Endothelial cell of umbilical vein (primary cell): ENCODE measurements at regions of chr2 and their contacts with region 1.

Region 1: DNA sequence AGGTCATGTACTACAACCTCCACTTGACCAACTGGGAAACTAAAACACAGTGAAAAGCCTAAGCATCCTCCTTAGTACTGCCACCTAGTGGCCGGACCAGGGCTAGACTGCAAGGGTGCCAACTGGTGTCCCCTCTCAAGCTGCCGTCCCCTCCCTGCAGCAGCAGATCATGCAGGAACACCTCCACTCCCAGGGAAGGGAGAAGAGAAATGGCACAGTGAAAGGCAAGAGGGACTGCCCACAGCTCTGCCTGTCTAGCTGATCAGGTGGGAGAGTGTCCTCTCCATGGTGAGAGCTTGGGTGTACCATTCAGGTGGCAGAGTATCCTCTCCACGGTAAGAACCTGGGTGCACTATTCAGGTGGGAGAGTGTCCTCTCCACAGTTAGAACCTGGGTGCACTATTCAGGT is 78.1 kb downstream of the AAK1 start:
- DNase-seq: peak; percentile 47
- H3K4me3 ChIP-seq: no peak overlapping the region
- H3K27ac ChIP-seq: no peak overlapping the region
- H3K4me1 ChIP-seq: peaks cover 5% of the 10 kb centered on the region
- H3K27me3 ChIP-seq: no peaks in the 10 kb centered on the region
- CTCF ChIP-seq: peak; percentile 82 to 86
- POLR2A ChIP-seq: no peak

Region 2: DNA sequence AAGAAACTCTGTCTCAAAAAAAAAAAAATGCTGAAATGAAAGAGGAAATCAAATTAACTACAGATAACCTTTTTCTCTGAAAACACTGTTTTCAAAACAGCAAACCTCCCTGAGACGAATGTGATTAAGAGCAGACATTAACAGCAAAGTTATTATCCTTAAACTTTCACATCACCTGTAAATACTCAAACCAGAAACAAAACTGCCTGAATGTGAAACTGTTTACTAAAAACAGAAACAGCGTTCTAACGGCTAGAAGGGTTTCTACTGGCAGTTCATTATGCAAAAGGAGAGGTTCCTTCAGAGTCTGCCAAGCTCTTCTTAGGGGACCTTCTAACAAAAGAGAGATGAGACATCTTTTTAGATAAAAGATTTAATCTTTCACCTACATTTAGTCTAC is 1361.8 kb before region 1 on chr2:
- CTCF ChIA-PET with region 1: no interaction called
- POLR2A ChIA-PET with region 1: no interaction called
- dilution Hi-C with region 1: no loop called
- intact Hi-C with region 1: no loop called
- DNase-seq: no peak
- H3K4me3 ChIP-seq: no peak overlapping the region
- H3K27ac ChIP-seq: no peak overlapping the region
- H3K4me1 ChIP-seq: no peaks in the 10 kb centered on the region
- H3K27me3 ChIP-seq: no peaks in the 10 kb centered on the region
- CTCF ChIP-seq: no peak
- POLR2A ChIP-seq: no peak

Region 3: DNA sequence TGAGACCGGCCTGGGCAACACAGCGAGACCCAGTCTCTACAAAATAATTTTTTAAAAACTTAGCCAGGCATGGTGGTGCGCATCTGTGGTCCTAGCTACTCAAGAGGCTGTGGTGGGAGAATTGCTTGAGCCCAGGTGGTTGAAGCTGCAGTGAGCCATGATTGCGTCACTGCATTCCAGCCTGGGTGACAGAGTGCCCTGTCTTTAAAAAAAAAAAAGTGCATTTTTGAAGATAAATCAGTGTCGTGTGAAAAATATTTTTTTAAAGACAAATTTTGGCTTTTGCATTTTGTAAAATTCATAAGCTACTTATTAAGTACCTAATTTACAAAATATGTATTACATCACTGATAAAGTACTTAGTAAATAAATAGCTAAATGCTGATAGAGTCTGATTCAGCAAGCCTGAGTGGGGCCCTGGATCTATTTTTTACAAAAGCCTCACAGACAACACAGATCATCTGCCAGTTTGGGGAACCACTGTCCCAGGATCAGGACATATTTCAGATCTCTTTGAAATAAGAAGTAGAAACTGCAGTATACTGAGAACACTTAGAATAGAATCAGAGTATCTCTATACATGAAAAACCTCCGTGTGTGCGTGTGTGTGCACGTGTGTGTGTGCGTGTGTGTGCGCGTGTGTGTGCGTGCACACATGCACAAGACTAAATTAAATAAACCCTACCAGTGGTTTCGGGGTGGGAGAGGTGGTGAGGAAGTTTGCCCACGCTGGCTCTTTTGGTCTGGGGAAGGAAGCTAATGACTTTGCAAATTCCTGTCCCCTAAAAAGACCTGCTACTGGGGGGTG is 16.5 kb after region 1 on chr2:
- CTCF ChIA-PET with region 1: interaction called, 35 read pairs
- POLR2A ChIA-PET with region 1: no interaction called
- dilution Hi-C with region 1: no loop called
- intact Hi-C with region 1: no loop called
- DNase-seq: no peak
- H3K4me3 ChIP-seq: no peak overlapping the region
- H3K27ac ChIP-seq: no peak overlapping the region
- H3K4me1 ChIP-seq: peaks cover 6% of the 10 kb centered on the region
- H3K27me3 ChIP-seq: no peaks in the 10 kb centered on the region
- CTCF ChIP-seq: no peak
- POLR2A ChIP-seq: no peak

Region 4: GRCh38 chr2:69594341-69594740 is 28.9 kb after region 1 on chr2:
- CTCF ChIA-PET with region 1: interaction called, 11 read pairs
- POLR2A ChIA-PET with region 1: no interaction called
- dilution Hi-C with region 1: no loop called
- intact Hi-C with region 1: no loop called
- DNase-seq: no peak
- H3K4me3 ChIP-seq: no peak overlapping the region
- H3K27ac ChIP-seq: no peak overlapping the region
- H3K4me1 ChIP-seq: no peaks in the 10 kb centered on the region
- H3K27me3 ChIP-seq: no peaks in the 10 kb centered on the region
- CTCF ChIP-seq: no peak
- POLR2A ChIP-seq: no peak

Region 5: DNA sequence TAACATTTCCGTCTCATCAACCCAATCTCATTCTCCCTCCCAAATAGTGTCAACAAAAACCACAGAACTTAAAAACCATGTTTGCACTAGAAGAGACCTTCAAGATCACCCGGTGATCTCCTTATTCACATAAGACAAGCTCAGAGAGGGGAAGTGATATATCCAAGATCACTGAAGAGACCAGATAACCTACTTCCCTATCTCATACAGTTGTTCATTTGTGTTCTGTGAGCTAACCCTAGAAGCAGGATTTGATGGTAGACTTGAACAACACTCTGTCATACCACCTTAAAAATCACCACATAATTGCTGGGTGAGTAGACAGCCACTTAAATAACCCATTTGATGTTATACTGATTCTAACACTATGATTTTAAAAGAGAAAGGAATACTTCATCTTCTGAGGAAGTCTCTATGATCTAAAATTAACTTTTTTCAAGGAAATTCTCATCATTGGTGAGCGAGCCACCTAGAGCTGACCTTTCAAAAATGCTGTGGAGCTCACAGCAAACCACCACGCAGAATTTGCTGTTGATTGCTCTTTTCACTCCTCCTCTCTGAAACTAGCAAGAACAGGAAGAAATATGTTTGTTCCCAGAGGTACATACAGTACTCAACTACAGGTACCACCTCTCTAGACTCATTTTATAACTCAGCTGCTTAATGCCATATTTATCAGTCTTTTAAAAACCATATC is 63.0 kb after region 1 on chr2:
- CTCF ChIA-PET with region 1: interaction called, 12 read pairs
- POLR2A ChIA-PET with region 1: no interaction called
- dilution Hi-C with region 1: no loop called
- intact Hi-C with region 1: no loop called
- DNase-seq: no peak
- H3K4me3 ChIP-seq: no peak overlapping the region
- H3K27ac ChIP-seq: no peak overlapping the region
- H3K4me1 ChIP-seq: peaks cover 2% of the 10 kb centered on the region
- H3K27me3 ChIP-seq: no peaks in the 10 kb centered on the region
- CTCF ChIP-seq: no peak
- POLR2A ChIP-seq: no peak

Region 6: GRCh38 chr2:69704446-69704845 is 139.0 kb after region 1 on chr2:
- CTCF ChIA-PET with region 1: interaction called, 10 read pairs
- POLR2A ChIA-PET with region 1: no interaction called
- dilution Hi-C with region 1: no loop called
- intact Hi-C with region 1: no loop called
- DNase-seq: no peak
- H3K4me3 ChIP-seq: no peak overlapping the region
- H3K27ac ChIP-seq: no peak overlapping the region
- H3K4me1 ChIP-seq: no peaks in the 10 kb centered on the region
- H3K27me3 ChIP-seq: no peaks in the 10 kb centered on the region
- CTCF ChIP-seq: no peak
- POLR2A ChIP-seq: no peak

Region 7: GRCh38 chr2:69715964-69716363 is 150.5 kb after region 1 on chr2:
- CTCF ChIA-PET with region 1: interaction called, 26 read pairs
- POLR2A ChIA-PET with region 1: interaction called, 14 read pairs
- dilution Hi-C with region 1: no loop called
- intact Hi-C with region 1: loop called (anchors 1 kb)
- DNase-seq: no peak
- H3K4me3 ChIP-seq: no peak overlapping the region
- H3K27ac ChIP-seq: no peak overlapping the region
- H3K4me1 ChIP-seq: no peaks in the 10 kb centered on the region
- H3K27me3 ChIP-seq: no peaks in the 10 kb centered on the region
- CTCF ChIP-seq: no peak
- POLR2A ChIP-seq: no peak

Region 8: GRCh38 chr2:70094978-70095719 is 529.7 kb after region 1 on chr2:
- CTCF ChIA-PET with region 1: no interaction called
- POLR2A ChIA-PET with region 1: no interaction called
- dilution Hi-C with region 1: no loop called
- intact Hi-C with region 1: no loop called
- DNase-seq: peak; percentile 78
- H3K4me3 ChIP-seq: no peak overlapping the region
- H3K27ac ChIP-seq: peak overlapping the region; percentile 14
- H3K4me1 ChIP-seq: peaks cover 14% of the 10 kb centered on the region
- H3K27me3 ChIP-seq: no peaks in the 10 kb centered on the region
- CTCF ChIP-seq: no peak
- POLR2A ChIP-seq: no peak